ENCODE measurements at regions of chr3 and their contacts with region 1.

Region 1: DNA sequence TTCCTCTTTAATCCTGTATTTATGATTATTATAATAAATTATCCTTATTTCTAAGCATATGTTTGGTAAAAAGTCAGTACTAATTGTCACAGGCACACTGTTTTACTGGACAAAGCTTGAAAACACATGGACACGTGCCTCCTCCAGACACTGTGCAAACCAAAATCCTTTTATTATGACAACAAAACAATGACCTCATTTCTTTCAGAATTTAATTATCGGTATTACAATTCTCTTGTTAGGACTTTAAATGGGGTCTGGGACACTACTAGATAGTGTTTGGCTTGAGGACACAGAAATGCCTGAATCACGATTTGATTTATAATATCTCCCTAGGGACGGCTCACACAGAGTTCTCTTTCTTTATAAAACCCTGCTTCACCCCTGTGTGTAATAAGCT is 107.3 kb upstream of the IGSF10 start:
- DNase-seq: peak; percentile 88
- H3K4me3 ChIP-seq: no peak overlapping the region
- H3K27ac ChIP-seq: peak overlapping the region; percentile 74
- H3K4me1 ChIP-seq: peaks cover 52% of the 10 kb centered on the region
- H3K27me3 ChIP-seq: no peaks in the 10 kb centered on the region
- CTCF ChIP-seq: no peak

Region 2: DNA sequence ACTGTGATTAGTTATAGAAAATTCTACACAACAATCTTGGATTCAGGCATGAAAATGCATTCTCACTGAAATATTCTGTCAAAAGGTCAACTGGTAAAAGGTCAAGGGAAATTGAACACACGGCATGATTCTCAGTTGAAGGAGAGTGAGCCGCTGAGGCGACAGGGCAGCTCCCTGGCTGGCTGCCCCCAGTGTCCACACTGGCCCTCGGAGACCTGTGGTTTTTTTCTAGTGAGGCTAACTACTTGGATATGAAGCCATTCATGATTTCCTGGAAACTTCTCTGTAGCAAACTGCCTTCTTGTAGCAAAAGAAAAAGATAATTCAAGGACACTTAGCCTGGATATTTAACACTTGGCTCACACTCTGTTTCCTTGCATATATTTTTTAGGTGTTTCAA is 202.8 kb after region 1 on chr3:
- CTCF ChIA-PET with region 1: no interaction called
- POLR2A ChIA-PET with region 1: no interaction called
- intact Hi-C with region 1: loop called (anchors 10 kb)
- DNase-seq: no peak
- H3K4me3 ChIP-seq: no peak overlapping the region
- H3K27ac ChIP-seq: peak overlapping the region; percentile 83
- H3K4me1 ChIP-seq: peaks cover 62% of the 10 kb centered on the region
- H3K27me3 ChIP-seq: no peaks in the 10 kb centered on the region
- CTCF ChIP-seq: no peak